Vagina (tissue), 2 donors: ENCODE measurements at regions of chr3 and their contacts with region 1.

Region 1: DNA sequence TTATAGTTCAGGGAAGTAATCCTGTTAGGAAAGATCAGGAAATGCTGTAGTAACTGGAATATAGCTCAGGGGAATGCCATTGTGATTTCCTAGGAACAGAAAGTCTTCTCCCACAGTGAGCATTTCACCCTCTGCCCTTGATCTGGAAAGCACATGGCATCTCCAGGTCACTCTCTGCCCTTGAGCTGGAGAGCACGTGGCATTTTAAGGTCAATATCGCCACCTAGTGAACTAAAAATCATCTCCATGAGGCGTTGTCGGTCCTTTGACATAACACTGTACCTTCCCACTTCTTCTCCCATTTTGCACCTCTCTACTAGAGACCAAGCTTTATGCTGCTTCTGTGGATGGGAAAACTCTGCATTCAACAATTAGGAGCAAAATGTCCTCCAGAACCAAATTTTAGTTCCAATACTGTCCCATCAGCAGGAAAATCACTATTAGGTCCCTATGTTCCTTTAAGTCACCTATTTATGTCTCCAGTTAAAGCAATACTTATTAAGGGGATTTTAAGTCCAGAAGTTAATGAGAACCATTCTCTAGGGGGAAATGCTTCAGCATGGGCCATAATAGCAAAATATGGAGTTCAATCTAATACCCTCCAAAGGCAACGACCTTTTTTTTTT is 54.7 kb upstream of the GK5 start:
- DNase-seq: peak in 1 of 2 donors; percentile 89
- H3K4me3 ChIP-seq: no peak overlapping the region
- H3K27ac ChIP-seq: no peak overlapping the region
- H3K4me1 ChIP-seq: no peaks in the 10 kb centered on the region
- H3K27me3 ChIP-seq: no peaks in the 10 kb centered on the region
- CTCF ChIP-seq: peak; percentile 62 to 69 (median 64)
- POLR2A ChIP-seq: no peak

Region 2: GRCh38 chr3:142129516-142130171 is 150.4 kb before region 1 on chr3:
- intact Hi-C with region 1: loop called (anchors 10 kb)
- DNase-seq: no peak
- H3K4me3 ChIP-seq: no peak overlapping the region
- H3K27ac ChIP-seq: no peak overlapping the region
- H3K4me1 ChIP-seq: no peaks in the 10 kb centered on the region
- H3K27me3 ChIP-seq: no peaks in the 10 kb centered on the region
- CTCF ChIP-seq: no peak
- POLR2A ChIP-seq: no peak

Region 3: GRCh38 chr3:142348460-142348859 is 68.4 kb after region 1 on chr3:
- intact Hi-C with region 1: no loop called
- DNase-seq: no peak
- H3K4me3 ChIP-seq: no peak overlapping the region
- H3K27ac ChIP-seq: no peak overlapping the region
- H3K4me1 ChIP-seq: no peaks in the 10 kb centered on the region
- H3K27me3 ChIP-seq: no peaks in the 10 kb centered on the region
- CTCF ChIP-seq: no peak
- POLR2A ChIP-seq: no peak